ENCODE measurements at regions of chr11 and their contacts with region 1.

Region 1: GRCh38 chr11:35391922-35392813 is 27.2 kb downstream of the SLC1A2 start:
- DNase-seq: peak; percentile 75
- H3K4me3 ChIP-seq: no peak overlapping the region
- H3K27ac ChIP-seq: no peak overlapping the region
- H3K4me1 ChIP-seq: peaks cover 9% of the 10 kb centered on the region
- H3K27me3 ChIP-seq: peaks cover 7% of the 10 kb centered on the region
- CTCF ChIP-seq: peak; percentile 91

Region 2: GRCh38 chr11:34512840-34513681 is 879.1 kb before region 1 on chr11:
- intact Hi-C with region 1: loop called (anchors 10 kb)
- DNase-seq: peak; percentile 29
- H3K4me3 ChIP-seq: no peak overlapping the region
- H3K27ac ChIP-seq: no peak overlapping the region
- H3K4me1 ChIP-seq: no peaks in the 10 kb centered on the region
- H3K27me3 ChIP-seq: peaks cover 3% of the 10 kb centered on the region
- CTCF ChIP-seq: peak; percentile 75

Region 3: DNA sequence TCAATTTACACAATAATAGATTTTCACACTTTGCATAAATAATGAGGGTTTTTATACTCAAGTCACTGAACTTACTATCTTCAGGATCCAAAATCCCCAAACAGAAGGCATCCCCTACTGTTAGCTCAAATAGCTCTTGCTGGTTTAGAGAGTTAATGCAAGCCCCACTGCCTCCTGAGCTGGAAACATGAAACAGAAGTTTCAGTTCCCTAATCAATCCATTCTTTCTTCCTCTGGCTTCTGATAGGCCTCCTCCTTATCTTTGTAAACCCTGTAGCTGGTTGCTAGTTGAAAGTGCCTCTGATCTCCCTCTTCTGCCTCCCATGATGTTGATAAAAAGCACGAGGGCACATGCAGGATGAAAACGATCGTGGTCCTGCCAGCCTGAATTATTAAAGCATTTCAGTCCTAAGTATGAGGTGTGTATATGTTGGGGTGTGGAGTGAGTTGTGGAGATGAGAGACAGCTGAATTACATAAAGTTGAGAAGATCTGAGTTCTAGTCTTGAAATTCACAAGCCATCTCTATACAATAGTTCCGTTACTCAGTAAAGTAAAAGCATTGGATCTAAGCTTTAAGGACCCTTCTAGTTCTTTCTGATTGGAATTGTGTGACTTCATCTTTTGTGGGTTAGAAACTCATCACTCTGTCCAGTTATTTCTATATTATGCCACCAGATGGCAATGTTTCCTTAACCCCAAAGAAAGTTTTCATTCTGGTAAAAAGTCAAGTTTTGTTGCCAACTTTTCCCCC is 806.3 kb before region 1 on chr11:
- intact Hi-C with region 1: loop called (anchors 10 kb)
- DNase-seq: no peak
- H3K4me3 ChIP-seq: peak overlapping the region; percentile 38
- H3K27ac ChIP-seq: no peak overlapping the region
- H3K4me1 ChIP-seq: peaks cover 7% of the 10 kb centered on the region
- H3K27me3 ChIP-seq: peaks cover 16% of the 10 kb centered on the region
- CTCF ChIP-seq: peak; percentile 75

Region 4: DNA sequence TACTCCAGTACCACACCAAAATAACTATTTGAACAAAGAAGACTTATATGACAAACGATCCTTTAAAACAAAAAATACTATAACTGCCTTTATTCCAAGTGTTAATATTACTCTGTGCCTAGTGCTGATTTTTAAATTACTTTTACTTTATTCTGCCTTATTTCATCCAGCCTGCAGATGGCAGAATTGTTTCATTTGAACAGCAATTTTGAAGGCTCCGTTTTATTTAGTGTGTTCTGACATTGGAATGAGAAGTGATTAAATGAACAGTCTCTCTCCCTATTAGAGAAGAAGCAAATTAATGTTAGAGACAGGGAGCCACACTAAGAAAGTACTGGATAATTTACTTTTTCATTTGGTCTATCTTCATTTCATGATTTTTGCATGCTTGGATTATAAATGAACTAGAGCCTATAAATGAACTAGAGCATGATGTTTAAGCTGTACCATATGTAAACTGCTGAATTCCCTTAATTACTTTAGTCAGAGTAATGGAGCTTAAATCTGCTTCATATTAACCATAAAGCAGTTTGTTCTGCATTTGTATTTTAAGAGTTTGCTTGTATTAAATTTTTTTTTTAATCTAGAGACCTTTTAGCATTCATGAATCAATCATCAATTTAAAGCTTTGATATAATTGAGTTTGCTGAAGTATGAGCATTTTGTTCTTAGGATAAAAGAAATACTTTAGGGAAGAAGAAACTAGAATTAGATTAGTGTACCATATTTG is 465.9 kb before region 1 on chr11:
- intact Hi-C with region 1: loop called (anchors 5 kb)
- DNase-seq: no peak
- H3K4me3 ChIP-seq: no peak overlapping the region
- H3K27ac ChIP-seq: no peak overlapping the region
- H3K4me1 ChIP-seq: peaks cover 77% of the 10 kb centered on the region
- H3K27me3 ChIP-seq: no peaks in the 10 kb centered on the region
- CTCF ChIP-seq: peak; percentile 76

Region 5: DNA sequence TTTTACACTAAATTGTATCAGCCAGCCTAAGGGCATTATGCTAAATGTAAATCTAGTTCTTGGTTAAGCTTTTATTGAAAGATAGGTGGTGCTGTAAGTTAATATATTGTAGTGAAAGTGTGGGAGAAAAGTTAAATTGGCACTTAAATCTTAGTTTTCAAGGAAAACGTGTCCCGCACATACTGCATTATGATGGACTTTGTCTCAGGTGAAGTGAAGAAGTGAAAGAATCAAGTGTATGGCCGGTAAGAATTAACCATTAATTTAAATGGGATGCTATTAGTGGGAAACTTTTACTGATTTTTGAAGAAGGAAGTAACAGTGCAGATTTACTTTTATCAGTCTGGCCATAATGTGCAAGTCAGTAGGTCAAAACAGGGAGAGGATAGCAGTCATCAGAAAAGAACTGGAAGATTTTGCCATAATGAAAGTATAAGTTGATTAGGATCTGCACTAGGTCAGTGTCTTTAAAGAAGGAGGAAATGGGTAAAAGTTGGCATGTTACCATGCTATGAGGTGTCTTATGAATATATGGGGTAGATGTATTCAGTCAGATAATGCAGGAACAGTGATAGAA is 394.1 kb before region 1 on chr11:
- intact Hi-C with region 1: loop called (anchors 10 kb)
- DNase-seq: no peak
- H3K4me3 ChIP-seq: no peak overlapping the region
- H3K27ac ChIP-seq: no peak overlapping the region
- H3K4me1 ChIP-seq: no peaks in the 10 kb centered on the region
- H3K27me3 ChIP-seq: no peaks in the 10 kb centered on the region
- CTCF ChIP-seq: peak; percentile 53

Region 6: DNA sequence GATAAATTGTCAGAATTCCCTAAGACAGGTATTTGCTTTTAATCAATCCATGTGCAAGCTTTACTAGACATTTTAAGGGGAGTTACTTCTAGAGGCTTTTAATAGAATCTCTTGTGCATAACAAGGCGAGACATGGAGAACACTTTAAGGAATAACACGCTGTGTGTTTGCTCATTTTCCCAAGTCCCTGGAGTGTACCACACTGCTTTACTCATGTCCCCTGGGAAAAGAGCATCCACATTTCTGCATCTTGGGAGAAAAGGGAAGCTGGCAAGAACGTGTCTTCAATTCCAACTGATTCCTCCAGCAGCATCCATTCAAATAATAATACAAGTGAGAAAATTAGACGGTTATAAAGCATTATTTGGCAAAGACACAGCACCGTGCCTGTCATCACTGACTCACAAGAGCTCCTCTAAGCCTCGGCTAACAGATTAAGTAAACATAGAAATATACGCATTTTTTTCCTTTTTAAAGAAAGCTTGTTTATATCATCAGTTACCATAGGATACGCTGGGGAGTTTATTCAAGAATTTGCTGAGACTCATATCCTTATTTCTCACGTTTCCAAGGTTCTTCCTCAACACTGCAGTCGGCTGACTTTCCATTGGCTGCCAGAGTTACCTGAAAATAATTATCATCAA is 131.7 kb before region 1 on chr11:
- intact Hi-C with region 1: loop called (anchors 10 kb)
- DNase-seq: no peak
- H3K4me3 ChIP-seq: no peak overlapping the region
- H3K27ac ChIP-seq: no peak overlapping the region
- H3K4me1 ChIP-seq: peaks cover 6% of the 10 kb centered on the region
- H3K27me3 ChIP-seq: no peaks in the 10 kb centered on the region
- CTCF ChIP-seq: no peak

Region 7: GRCh38 chr11:35598254-35599125 is 206.3 kb after region 1 on chr11:
- intact Hi-C with region 1: no loop called
- DNase-seq: no peak
- H3K4me3 ChIP-seq: no peak overlapping the region
- H3K27ac ChIP-seq: no peak overlapping the region
- H3K4me1 ChIP-seq: no peaks in the 10 kb centered on the region
- H3K27me3 ChIP-seq: peaks cover 72% of the 10 kb centered on the region
- CTCF ChIP-seq: no peak